AG04449 (cell line): ENCODE measurements at regions of chr12 and their contacts with region 1.

Region 1: DNA sequence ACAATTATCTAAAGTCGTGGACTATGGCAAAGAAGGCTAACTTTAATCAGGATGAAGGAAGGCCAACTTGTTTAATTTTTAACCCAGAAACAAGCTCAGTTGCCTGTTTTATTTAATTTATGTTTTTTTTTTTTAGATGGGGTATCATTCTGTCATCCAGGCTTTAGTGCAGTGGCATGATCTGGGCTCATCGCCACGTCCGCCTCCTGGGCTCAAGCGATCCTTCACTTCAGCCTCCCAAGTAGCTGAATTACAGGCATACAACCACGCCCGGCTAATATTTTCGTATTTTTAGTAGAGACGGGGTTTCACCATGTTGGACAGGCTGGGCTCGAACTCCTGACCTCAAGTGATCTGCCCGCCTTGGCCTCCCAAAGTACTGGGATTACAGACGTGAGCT is 19.7 kb downstream of the NUDT4 start:
- DNase-seq: no peak
- H3K4me3 ChIP-seq: no peak overlapping the region
- CTCF ChIP-seq: no peak

Region 2: GRCh38 chr12:92784795-92785562 is 612.4 kb before region 1 on chr12:
- CTCF ChIA-PET with region 1: interaction called, 21 read pairs
- POLR2A ChIA-PET with region 1: no interaction called
- DNase-seq: peak; percentile 23
- H3K4me3 ChIP-seq: no peak overlapping the region
- CTCF ChIP-seq: peak; percentile 46

Region 3: DNA sequence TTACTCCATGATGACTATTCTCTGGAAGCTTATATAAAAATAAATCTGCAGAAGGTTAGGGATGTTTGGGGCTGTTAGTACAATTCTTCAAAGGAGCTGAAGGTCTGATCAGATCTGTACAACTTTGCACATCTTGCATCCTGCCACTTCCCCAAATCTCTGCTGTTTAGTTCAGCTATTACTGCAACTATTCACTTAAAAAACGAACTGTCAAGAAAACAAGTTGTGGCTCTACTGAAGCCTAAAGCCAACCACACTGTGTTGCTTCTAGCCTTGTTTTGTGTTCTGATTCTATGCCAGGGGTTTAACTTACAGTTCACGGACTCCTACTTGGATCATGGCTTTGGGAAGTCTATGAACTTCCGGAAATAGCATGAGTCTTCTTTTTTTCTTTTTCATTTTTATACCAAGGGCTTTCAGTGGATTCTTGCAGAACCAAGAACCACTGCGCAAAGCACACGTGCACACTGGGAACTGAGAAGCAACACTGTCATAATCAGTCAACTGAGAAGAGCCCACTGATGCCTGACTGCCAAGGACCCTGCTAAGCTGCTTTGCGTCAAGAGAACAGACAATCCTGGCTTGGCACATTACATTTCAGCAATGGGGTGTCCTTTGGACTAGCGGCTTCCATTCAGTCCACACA is 402.0 kb before region 1 on chr12:
- CTCF ChIA-PET with region 1: interaction called, 29 read pairs
- POLR2A ChIA-PET with region 1: no interaction called
- DNase-seq: no peak
- H3K4me3 ChIP-seq: no peak overlapping the region
- CTCF ChIP-seq: no peak

Region 4: GRCh38 chr12:93025145-93025805 is 372.1 kb before region 1 on chr12:
- CTCF ChIA-PET with region 1: interaction called, 14 read pairs
- POLR2A ChIA-PET with region 1: no interaction called
- DNase-seq: peak; percentile 21
- H3K4me3 ChIP-seq: no peak overlapping the region
- CTCF ChIP-seq: peak; percentile 58

Region 5: GRCh38 chr12:93378373-93379325 is 18.8 kb before region 1 on chr12:
- CTCF ChIA-PET with region 1: interaction called, 30 read pairs
- POLR2A ChIA-PET with region 1: no interaction called
- DNase-seq: peak; percentile 46
- H3K4me3 ChIP-seq: peak overlapping the region; percentile 79
- CTCF ChIP-seq: no peak

Region 6: DNA sequence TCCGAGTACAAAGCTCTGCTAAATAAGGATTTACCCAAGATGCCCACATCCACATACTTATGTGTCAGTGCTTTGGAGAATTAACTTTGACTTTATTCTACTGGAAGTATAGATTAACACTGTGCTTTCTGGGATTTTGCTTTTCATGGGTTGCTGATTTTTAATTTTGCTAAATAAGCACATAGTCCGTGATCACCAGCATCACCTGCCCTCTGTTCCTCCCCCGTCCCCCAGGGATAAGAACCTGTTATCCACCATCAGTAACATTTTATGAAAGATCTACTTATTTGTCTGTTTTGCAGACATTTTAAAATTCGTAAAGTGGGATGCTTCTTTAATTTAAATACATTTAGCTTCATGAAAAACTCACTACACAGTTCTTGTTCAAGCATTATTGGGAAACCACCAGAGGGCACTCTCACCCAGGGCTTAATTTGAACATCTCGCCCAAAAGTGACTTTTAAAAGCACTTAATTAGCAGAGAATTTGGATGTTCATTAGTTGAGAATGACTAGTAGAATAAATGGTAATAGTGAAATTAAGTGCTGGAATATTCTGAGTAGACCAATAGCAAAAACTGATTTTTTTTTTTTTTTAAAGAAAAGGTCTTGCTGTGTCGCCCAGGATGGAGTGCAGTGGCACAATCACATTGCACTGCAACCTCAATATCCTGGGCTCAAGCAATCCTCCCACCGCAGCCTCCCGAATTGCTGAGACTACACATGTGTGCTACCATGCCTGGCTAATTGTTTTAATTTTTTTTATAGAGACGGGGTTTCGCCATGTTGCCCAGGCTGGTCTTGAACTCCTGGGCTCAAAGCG is 105.6 kb after region 1 on chr12:
- CTCF ChIA-PET with region 1: no interaction called
- POLR2A ChIA-PET with region 1: no interaction called
- DNase-seq: no peak
- H3K4me3 ChIP-seq: no peak overlapping the region
- CTCF ChIP-seq: peak; percentile 55